ENCODE measurements at regions of chr17 and their contacts with region 1.

Region 1: DNA sequence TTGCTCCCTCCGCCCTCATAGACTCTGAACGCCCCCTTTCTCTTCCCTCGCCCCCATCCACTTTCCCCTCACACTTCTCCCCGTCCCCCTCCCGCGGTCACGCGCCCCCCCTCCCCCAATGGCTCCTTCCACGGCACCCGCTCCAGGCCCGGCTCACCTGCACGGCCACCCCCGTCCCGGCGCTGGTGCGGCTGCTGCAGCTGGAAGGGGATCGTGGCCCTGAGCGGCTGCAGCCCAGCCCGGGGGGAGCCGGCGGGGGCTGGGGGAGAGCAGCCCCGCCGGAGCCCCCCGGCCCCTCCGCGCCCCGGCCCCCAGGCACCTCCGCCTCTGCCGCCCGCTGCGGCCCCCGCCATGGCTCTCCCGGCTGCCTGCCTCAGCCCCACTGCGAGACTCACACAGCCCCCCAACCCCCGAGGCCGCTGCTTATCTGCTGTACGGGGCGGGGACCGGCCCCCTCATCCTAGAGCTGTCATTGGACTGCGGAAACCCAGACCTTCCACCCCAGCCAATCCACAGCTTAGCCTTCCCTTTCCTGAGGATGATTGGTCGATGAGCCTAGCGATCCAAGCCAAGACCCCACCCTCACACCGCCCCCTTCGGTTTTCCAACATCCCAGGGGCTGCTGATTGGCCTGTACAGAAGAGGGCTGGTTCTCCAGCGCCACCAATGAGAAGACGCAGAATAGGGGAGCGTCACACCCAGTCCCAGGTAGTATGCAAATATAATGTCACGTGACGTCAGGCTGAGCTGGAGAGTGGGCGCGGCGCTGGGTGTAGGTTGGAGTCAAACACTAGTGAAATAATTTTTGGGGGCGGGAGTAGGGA is at the start of gene FAM117A:
- DNase-seq: peak; percentile 97
- total RNA-seq, gene FAM117A: 6.5 to 11.1 TPM

Region 2: GRCh38 chr17:49715717-49716279 is 48.1 kb before region 1 on chr17:
- intact Hi-C with region 1: loop called in 1 of 2 experiments (anchors 10 kb)
- DNase-seq: no peak